Ovary (tissue), 10 donors: ENCODE measurements at regions of chr1 and their contacts with region 1.

Region 1: DNA sequence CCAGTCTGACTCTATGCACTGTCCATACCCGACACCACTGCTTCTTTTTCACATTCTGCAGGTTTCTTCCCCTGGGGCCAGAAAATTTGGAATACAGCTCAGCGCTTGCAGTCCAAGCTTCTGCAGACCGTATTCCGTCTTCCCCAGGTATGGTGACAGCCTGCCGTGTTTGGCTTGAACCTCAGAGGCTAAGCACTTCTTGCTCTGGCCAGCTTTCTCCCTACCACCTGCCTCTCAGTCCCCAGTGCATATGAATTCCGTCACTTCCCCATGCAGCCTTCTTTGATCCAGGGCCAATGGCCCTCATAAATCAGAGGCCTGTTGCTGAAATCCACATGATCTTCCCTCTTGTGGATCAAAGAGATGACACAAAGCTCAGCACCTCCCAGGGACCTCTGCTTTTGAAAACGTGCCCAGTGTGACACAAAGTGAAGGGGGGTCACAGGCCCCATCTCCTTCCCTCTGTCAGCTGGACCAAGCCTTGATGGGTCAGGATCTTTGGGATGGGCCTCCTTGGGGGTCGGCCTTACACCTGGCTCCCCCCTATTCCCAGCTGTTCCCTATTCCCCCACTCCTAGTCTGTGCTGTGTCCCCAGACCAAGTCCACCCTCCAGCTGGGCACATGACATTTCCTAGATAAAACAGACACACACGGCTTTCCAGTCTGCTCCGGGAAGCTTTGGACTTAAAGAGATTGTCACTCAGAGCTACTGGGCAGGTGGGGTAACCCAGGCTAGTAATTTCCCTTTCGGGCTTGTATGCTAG is 66.6 kb downstream of the HMGB4 start:
- DNase-seq: no peak
- H3K4me3 ChIP-seq: no peak overlapping the region
- H3K27ac ChIP-seq: no peak overlapping the region
- H3K4me1 ChIP-seq: no peaks in the 10 kb centered on the region
- H3K27me3 ChIP-seq: no peaks in the 10 kb centered on the region
- CTCF ChIP-seq: no peak
- EP300 ChIP-seq: no peak
- POLR2A ChIP-seq: no peak

Region 2: GRCh38 chr1:34066981-34067603 is 136.6 kb after region 1 on chr1:
- intact Hi-C with region 1: loop called in 1 of 4 experiments (anchors 10 kb)
- DNase-seq: no peak
- H3K4me3 ChIP-seq: no peak overlapping the region
- H3K27ac ChIP-seq: no peak overlapping the region
- H3K4me1 ChIP-seq: no peaks in the 10 kb centered on the region
- H3K27me3 ChIP-seq: no peaks in the 10 kb centered on the region
- CTCF ChIP-seq: no peak
- EP300 ChIP-seq: no peak
- POLR2A ChIP-seq: no peak